Right ventricle myocardium inferior (tissue), 1 donor: ENCODE measurements at regions of chr6 and their contacts with region 1.

Region 1: DNA sequence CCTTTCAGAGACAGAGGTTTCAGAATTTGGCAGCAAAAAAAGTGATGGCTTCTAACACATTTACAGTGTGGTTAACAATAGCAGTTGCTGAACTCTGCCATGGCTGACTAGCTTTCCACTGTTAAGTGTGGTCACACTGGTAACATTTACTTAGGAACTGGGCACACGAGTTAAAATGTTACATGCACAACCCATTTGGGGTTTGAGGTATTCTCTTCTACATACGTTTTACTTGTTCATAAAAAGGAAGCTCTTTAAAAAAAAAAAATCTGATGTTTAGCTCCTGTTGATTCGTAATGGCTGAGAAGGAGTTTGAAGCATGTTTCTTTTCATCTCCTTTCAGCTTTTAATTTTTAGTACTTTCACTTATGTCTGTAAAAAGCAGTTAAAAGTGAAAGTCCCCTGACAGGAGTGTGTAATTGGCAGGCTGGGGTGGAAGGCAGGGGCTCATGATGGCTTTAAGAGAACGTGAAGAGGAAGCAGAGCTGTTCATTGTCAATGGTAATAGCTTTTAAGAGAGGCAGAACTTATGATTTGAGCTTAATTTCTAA is 245.9 kb downstream of the FARS2 start:
- DNase-seq: no peak
- ATAC-seq: no peak

Region 2: DNA sequence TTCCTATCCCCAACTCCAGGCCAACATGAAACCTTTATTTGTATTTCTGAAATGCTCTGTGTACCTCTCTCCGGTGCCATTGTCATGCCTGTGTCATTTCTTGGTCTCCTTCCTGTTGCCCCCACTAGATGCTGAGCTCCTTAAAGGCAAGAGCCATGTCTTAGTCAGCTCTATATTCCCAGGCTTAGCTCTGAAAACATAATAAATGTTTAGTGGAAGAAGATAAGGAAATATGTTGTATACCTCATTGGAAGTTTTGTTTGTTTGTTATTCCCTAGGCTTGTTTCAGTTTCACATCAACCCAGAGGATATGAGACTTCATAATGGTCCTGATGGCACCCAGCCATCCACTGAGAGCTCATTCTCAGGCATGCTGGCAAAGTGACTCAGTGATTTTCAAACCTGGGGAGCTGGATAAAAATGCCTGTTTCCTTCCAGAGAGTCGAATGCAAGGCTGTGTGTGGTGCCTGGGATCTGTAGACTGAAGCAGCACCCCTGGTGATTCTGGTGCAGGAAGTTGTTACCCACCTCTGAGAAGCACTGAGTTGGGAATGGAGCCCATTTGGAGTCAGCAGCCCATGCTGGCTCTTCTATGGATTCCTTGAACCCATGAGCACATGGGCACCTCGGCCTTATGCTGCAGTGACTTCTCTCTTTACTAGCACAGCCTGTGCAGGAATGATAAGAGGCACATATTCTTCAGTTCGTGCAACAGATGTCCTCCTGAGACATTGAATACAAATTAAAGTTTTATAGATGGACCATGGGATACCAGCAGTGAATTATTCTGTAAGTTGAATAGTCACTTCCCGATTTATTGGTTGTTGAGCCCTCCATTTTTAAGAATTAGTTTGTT is 40.7 kb before region 1 on chr6:
- intact Hi-C with region 1: no loop called
- DNase-seq: no peak
- ATAC-seq: no peak

Region 3: GRCh38 chr6:5636210-5637030 is 129.2 kb after region 1 on chr6:
- intact Hi-C with region 1: loop called (anchors 5 kb)
- DNase-seq: no peak
- ATAC-seq: no peak